ENCODE measurements at regions of chr7 and their contacts with region 1.

Region 1: GRCh38 chr7:92854501-92855238 is 18.3 kb upstream of the CDK6 start:
- DNase-seq: no peak
- ATAC-seq: no peak
- H3K4me3 ChIP-seq: no peak overlapping the region
- H3K27ac ChIP-seq: no peak overlapping the region
- H3K4me1 ChIP-seq: no peaks in the 10 kb centered on the region
- H3K27me3 ChIP-seq: no peaks in the 10 kb centered on the region
- CTCF ChIP-seq: no peak
- POLR2A ChIP-seq: no peak
- RAD21 ChIP-seq: no peak

Region 2: GRCh38 chr7:92763636-92764423 is 90.8 kb before region 1 on chr7:
- CTCF ChIA-PET with region 1: no interaction called
- POLR2A ChIA-PET with region 1: no interaction called
- dilution Hi-C with region 1: no loop called
- in situ Hi-C with region 1: no loop called
- intact Hi-C with region 1: no loop called
- DNase-seq: peak; percentile 81
- ATAC-seq: peak; percentile 47
- H3K4me3 ChIP-seq: no peak overlapping the region
- H3K27ac ChIP-seq: peak overlapping the region; percentile 27; the same call in 1 of the 2 replicates
- H3K4me1 ChIP-seq: peaks cover 27% of the 10 kb centered on the region
- H3K27me3 ChIP-seq: no peaks in the 10 kb centered on the region
- CTCF ChIP-seq: no peak; the same call in 1 of the 2 replicates
- POLR2A ChIP-seq: no peak
- RAD21 ChIP-seq: no peak

Region 3: DNA sequence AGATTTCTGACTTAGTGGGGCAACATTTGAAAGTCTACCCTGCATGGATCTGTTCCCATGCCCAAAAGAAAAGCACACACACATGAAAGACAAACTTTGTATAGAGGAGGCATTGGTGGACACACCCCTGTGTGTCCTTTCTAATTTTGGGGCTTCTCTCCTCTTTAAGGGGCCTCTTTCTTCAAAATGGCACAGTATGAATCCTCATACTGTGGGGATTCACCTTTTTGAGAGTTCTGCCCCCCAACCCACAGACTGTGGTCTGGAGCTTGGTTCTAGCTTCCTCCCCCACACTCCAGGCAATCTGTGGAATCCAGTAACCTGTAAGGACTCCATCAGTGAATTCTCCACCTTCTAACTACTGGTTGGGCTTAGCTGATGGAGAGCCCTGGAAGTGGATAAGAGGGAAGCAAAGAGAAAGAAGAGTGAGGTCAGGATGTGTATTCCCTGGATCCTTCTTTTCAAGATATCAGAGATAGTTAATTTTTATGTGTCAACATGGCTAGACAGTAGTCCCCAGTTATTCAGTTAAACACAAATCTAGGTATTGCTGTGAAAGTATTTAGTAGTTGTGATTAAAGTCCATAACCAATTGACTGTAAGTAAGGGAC is 14.1 kb after region 1 on chr7:
- CTCF ChIA-PET with region 1: no interaction called
- POLR2A ChIA-PET with region 1: no interaction called
- dilution Hi-C with region 1: no loop called
- in situ Hi-C with region 1: no loop called
- intact Hi-C with region 1: loop called (anchors 2 kb)
- DNase-seq: no peak
- ATAC-seq: no peak
- H3K4me3 ChIP-seq: no peak overlapping the region
- H3K27ac ChIP-seq: no peak overlapping the region
- H3K4me1 ChIP-seq: no peaks in the 10 kb centered on the region
- H3K27me3 ChIP-seq: no peaks in the 10 kb centered on the region
- CTCF ChIP-seq: no peak
- POLR2A ChIP-seq: no peak
- RAD21 ChIP-seq: no peak

Region 4: DNA sequence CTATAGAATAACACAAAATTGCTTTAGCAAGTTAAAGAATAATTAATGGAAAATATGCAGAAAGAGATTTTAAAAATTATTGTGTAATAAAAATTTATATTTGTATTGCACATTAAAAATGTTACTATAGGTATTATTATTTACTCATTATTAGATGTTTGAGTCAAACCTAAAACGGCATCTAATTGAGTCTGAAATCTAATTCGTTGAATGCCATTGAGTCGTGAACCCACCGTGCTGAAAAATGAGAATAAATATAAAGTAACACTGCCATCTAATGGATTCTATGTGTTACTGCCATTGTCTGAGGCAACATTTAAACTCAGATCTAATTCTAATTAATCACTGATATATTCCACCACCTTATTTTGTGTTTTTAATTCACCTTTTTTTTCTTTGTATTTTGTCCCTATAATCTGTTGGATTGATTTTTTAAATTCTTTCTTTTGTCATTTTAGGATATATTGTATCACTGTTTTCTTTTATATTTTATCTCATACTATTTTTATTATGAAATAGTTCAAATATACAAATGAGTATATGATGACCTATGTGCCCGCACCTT is 201.0 kb after region 1 on chr7:
- CTCF ChIA-PET with region 1: no interaction called
- POLR2A ChIA-PET with region 1: no interaction called
- dilution Hi-C with region 1: no loop called
- in situ Hi-C with region 1: no loop called
- intact Hi-C with region 1: no loop called
- DNase-seq: peak; percentile 62
- ATAC-seq: peak; percentile 89
- H3K4me3 ChIP-seq: no peak overlapping the region
- H3K27ac ChIP-seq: no peak overlapping the region
- H3K4me1 ChIP-seq: no peaks in the 10 kb centered on the region
- H3K27me3 ChIP-seq: no peaks in the 10 kb centered on the region; the same call in 1 of the 2 replicates
- CTCF ChIP-seq: peak; percentile 82
- POLR2A ChIP-seq: no peak
- RAD21 ChIP-seq: peak; percentile 86